PC-9 (cell line): ENCODE measurements at regions of chr13 and their contacts with region 1.

Region 1: GRCh38 chr13:83765796-83766195 is 116.5 kb downstream of the SLITRK1 start:
- DNase-seq: no peak
- H3K4me3 ChIP-seq: no peak overlapping the region
- H3K27ac ChIP-seq: no peak overlapping the region
- H3K4me1 ChIP-seq: no peaks in the 10 kb centered on the region
- H3K27me3 ChIP-seq: no peaks in the 10 kb centered on the region
- CTCF ChIP-seq: no peak

Region 2: GRCh38 chr13:84332346-84332745 is 566.5 kb after region 1 on chr13:
- CTCF ChIA-PET with region 1: interaction called, 15 read pairs
- POLR2A ChIA-PET with region 1: no interaction called
- intact Hi-C with region 1: no loop called
- DNase-seq: no peak
- H3K4me3 ChIP-seq: no peak overlapping the region
- H3K27ac ChIP-seq: no peak overlapping the region
- H3K4me1 ChIP-seq: no peaks in the 10 kb centered on the region
- H3K27me3 ChIP-seq: no peaks in the 10 kb centered on the region
- CTCF ChIP-seq: no peak